Posterior cingulate gyrus (tissue), 11 donors: ENCODE measurements at regions of chr6 and their contacts with region 1.

Region 1: DNA sequence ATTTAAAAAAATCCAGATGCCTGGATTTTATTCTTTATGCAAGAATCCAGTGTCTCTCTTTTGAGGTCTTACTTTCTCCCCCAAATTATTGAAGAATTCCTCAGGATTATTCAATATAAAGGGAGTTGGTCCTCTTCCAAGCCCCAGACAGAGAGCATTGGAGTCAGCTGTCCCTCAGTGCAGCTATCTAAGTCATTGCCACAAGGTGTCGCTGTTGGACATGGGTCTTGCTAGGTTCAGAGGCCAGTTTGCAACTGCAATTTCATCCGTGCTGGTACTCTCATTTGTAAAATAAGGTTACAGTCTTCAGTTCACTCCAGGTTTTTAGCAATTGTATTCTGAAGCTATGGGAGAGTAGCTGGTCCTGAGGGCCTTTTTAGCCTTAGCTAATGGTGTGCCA is 27.8 kb downstream of the CCN2 start:
- DNase-seq: peak in 3 of 10 donors; percentile 31 to 79 (median 57)

Region 2: GRCh38 chr6:131966443-131966842 is 43.1 kb after region 1 on chr6:
- intact Hi-C with region 1: no loop called
- DNase-seq: no peak

Region 3: GRCh38 chr6:132161283-132161682 is 237.9 kb after region 1 on chr6:
- intact Hi-C with region 1: loop called (anchors 1 kb)
- DNase-seq: no peak

Region 4: GRCh38 chr6:132218059-132218696 is 294.8 kb after region 1 on chr6:
- intact Hi-C with region 1: loop called (anchors 2 kb)
- DNase-seq: no peak

Region 5: GRCh38 chr6:132279592-132280139 is 356.3 kb after region 1 on chr6:
- intact Hi-C with region 1: loop called (anchors 10 kb)
- DNase-seq: peak; percentile 60 to 97 (median 80)

Region 6: DNA sequence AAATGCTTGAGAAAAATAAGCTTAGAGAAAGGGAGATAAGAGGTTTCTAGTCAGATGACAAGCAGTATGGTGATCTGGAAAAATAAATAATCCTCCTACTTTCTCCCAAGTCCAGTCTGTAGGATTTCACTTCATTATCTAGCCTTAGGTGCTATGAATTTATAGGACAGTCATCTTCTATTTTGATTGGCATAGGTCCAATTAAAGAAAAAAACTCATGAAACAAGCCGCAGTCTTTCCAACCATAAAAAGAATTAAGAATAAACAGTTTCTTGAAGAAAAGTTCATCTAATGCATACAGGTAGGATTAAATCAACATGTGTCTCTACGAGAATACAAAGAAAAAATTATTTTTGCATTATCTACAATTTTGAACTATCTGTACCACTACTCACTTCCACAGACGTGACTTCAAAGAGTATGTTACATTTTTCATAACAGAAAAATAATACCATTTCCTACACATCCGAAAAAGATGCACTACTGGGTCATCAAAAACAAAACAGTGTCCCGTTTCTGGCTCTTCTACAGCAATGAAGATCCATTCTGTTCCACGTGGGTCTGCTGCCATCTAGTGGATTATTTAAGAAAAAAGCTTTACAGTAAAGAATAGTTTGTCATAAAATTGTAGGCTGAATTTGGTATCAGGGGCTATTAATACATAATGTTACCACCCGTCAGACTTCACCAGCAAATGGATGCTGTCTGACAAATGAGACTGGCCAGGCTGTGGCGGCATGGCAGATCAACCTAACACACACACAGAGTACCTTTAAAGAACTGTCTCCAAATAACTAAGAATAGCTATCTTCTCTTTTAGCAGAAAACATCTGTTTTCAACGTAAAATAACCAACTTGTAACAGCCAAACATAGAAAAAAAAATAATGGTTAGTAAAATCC is 560.7 kb after region 1 on chr6:
- intact Hi-C with region 1: loop called (anchors 5 kb)
- DNase-seq: peak in 1 of 10 donors; percentile 29